ENCODE measurements at regions of chr17 and their contacts with region 1.

Region 1: GRCh38 chr17:50397111-50397918 is at the start of gene LRRC59:
- DNase-seq: peak; percentile 88
- H3K4me3 ChIP-seq: peak within 1 kb of the TSS; percentile 39 to 89 (median 67)
- H3K27ac ChIP-seq: peak within 1 kb of the TSS; percentile 63
- H3K4me1 ChIP-seq: peaks cover 21% of the 10 kb centered on the region
- H3K27me3 ChIP-seq: no peaks in the 10 kb centered on the region
- CTCF ChIP-seq: peak; percentile 99 to 100
- POLR2A ChIP-seq: peak; percentile 81
- total RNA-seq, gene LRRC59: 179 and 183 TPM in 2 replicates

Region 2: DNA sequence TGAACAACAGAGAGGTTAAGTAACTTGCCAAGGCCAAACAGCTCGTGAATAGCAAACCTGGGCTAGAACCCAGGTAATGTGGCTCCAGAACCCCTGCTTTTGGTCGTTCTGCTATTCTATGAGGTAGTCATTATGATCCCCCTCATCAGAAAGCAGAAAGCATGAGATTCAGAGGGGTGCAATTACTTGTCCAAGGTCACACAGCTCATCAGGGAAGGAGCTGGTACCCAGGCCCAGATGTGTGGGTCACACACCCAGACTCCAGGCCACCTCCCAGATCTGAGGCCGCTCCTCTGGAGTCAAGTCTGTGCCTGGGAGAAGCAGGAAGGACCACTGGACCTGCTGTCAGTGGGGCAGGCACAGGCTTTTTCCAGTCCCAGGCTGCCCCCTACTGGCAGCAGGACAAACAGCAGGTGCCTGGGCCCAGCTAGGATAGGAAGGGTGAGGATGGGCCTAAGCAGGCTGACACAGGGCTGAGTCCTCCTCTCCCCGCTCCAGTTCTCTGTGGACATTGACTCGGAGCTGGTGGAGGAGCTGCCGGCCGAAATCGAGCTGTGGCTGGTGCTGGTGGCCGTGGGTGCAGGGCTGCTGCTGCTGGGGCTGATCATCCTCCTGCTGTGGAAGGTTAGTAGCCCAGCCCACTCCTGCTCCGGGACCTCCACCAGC is 309.9 kb before region 1 on chr17:
- CTCF ChIA-PET with region 1: no interaction called
- POLR2A ChIA-PET with region 1: no interaction called
- dilution Hi-C with region 1: no loop called
- intact Hi-C with region 1: no loop called
- DNase-seq: peak; percentile 64
- H3K4me3 ChIP-seq: no peak overlapping the region
- H3K27ac ChIP-seq: no peak overlapping the region
- H3K4me1 ChIP-seq: no peaks in the 10 kb centered on the region
- H3K27me3 ChIP-seq: no peaks in the 10 kb centered on the region
- CTCF ChIP-seq: peak; percentile 96
- POLR2A ChIP-seq: no peak

Region 3: DNA sequence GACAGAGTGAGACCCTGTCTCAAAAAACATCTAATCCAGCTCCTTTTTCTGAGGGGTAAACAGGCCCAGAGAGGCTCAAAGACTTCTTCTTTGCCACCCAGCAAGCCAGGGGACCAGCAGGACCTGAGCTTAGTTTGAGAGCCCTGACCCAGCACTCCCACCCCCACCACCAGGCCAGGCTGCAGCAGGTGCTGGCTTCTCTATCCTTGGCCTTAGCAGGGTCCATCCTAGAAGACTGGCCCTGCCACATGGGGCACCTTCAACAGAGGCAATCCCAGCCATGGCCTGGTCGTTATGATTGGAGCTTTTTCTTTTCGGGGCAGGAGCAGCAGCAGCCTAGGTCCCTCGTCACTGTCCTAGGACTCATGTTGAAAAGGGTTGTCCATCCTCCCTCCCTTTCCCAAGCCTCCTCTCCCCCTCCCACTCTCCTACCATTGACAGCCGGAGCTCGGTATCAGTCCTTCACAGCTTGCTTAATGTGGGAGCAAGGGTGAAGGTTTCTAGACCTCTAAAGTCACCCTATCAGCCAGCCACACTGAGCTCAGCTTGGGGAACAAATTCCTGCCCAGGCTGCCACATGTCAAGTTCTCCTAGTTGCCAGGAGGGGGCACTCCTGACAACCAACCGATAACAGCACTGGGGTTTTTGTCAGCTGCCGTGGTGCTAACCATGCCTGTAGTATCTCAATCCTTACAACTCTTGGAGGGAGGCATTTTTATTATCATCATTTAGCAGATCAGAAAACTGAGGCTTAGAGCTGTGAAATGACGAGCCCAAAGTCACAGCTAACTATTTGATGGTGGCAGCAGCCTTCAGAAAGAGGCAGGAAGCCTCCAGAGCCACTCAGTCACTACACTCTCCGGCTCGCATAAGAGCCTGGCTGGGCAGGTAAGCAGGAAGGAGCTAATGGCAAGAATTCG is 35.5 kb before region 1 on chr17:
- CTCF ChIA-PET with region 1: interaction called, 17 read pairs
- POLR2A ChIA-PET with region 1: no interaction called
- dilution Hi-C with region 1: no loop called
- intact Hi-C with region 1: no loop called
- DNase-seq: peak; percentile 61
- H3K4me3 ChIP-seq: no peak overlapping the region
- H3K27ac ChIP-seq: no peak overlapping the region
- H3K4me1 ChIP-seq: no peaks in the 10 kb centered on the region
- H3K27me3 ChIP-seq: no peaks in the 10 kb centered on the region
- CTCF ChIP-seq: peak; percentile 77 to 84
- POLR2A ChIP-seq: no peak

Region 4: GRCh38 chr17:50386510-50386909 is 10.8 kb before region 1 on chr17:
- CTCF ChIA-PET with region 1: interaction called, 14 read pairs
- POLR2A ChIA-PET with region 1: interaction called, 4 read pairs
- dilution Hi-C with region 1: no loop called
- intact Hi-C with region 1: no loop called
- DNase-seq: no peak
- H3K4me3 ChIP-seq: no peak overlapping the region
- H3K27ac ChIP-seq: no peak overlapping the region
- H3K4me1 ChIP-seq: no peaks in the 10 kb centered on the region
- H3K27me3 ChIP-seq: no peaks in the 10 kb centered on the region
- CTCF ChIP-seq: no peak
- POLR2A ChIP-seq: no peak

Region 5: DNA sequence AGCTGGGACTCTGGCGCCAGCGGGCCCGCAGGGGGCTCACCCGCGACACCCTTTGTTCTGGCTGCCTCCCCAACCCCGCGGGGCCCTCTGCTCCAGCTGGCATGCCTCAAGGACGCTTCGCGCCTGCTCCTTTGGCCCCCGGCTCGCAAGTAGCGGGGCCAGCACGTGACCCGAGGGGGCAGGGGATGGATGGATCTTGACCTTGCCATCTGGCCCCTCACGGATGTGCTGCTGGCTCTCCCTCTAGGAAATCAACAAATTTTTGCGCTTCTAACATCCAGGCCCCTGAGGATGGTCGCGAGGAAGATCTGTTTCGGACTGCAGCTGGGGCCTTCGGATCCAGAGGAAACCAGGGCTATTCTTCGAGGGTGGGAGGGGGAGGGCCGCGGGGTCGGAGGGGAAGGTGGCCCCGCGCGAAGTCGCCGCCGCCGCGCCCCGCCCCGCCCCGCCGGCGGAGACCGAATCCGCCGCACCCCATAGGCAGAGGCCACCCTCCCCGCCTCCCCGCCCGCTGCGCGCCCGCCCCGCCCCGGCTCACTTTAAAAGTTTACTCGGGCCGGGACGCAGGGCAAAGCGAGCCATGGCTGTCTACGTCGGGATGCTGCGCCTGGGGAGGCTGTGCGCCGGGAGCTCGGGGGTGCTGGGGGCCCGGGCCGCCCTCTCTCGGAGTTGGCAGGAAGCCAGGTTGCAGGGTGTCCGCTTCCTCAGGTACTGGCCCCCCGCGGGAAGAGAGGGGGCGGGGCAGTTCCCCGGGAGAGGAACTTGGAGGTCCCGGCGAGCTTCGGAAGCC is 28.6 kb after region 1 on chr17 and contains the start of gene ACSF2:
- CTCF ChIA-PET with region 1: interaction called, 21 read pairs
- POLR2A ChIA-PET with region 1: interaction called, 7 read pairs
- dilution Hi-C with region 1: no loop called
- intact Hi-C with region 1: loop called (anchors 2 kb)
- DNase-seq: peak; percentile 42
- H3K4me3 ChIP-seq: peak within 1 kb of the TSS; percentile 43 to 79 (median 72)
- H3K27ac ChIP-seq: peak within 1 kb of the TSS; percentile 63
- H3K4me1 ChIP-seq: peaks cover 41% of the 10 kb centered on the region
- H3K27me3 ChIP-seq: no peaks in the 10 kb centered on the region
- CTCF ChIP-seq: no peak
- POLR2A ChIP-seq: peak; percentile 67
- total RNA-seq, gene ACSF2: 24.6 and 37.2 TPM in 2 replicates

Region 6: DNA sequence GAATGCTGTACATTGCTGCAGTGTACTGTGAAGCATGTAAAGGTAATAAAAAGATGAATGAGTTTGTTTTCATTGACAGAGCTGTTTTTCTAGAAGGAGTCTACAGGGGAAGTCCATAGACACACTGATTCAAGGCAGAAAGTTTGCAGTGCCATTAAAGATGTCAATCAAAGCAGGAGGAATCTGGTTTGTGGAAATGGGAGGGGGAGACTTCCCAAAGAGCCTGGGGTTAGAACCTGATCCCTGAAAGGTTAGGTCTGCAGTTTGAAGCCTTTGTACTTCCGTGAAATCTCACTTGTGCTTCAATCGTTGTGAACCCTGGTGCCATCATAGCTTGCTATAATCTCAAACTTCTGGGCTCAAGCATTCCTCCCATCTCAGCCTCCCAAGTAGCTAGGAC is 33.9 kb after region 1 on chr17:
- CTCF ChIA-PET with region 1: interaction called, 20 read pairs
- POLR2A ChIA-PET with region 1: interaction called, 3 read pairs
- dilution Hi-C with region 1: no loop called
- intact Hi-C with region 1: loop called (anchors 2 kb)
- DNase-seq: no peak
- H3K4me3 ChIP-seq: no peak overlapping the region
- H3K27ac ChIP-seq: no peak overlapping the region
- H3K4me1 ChIP-seq: peaks cover 8% of the 10 kb centered on the region
- H3K27me3 ChIP-seq: no peaks in the 10 kb centered on the region
- CTCF ChIP-seq: no peak
- POLR2A ChIP-seq: no peak

Measured in endothelial cell of umbilical vein (primary cell).